Activated T-helper 1 cell treated with anti-CD3 and anti-CD28 coated beads, Interleukin-12 subunit alpha, Interleukin-12 subunit beta, Interleukin-2, Interleukin-4 antibody, amounts not matched to agents 30 ng/mL and 10 ng/mL and 1 ng/mL, durations not matched to agents 14 hours and 24 hours and 36 hours (primary cell): ENCODE measurements at regions of chr19 and their contacts with region 1.

Region 1: DNA sequence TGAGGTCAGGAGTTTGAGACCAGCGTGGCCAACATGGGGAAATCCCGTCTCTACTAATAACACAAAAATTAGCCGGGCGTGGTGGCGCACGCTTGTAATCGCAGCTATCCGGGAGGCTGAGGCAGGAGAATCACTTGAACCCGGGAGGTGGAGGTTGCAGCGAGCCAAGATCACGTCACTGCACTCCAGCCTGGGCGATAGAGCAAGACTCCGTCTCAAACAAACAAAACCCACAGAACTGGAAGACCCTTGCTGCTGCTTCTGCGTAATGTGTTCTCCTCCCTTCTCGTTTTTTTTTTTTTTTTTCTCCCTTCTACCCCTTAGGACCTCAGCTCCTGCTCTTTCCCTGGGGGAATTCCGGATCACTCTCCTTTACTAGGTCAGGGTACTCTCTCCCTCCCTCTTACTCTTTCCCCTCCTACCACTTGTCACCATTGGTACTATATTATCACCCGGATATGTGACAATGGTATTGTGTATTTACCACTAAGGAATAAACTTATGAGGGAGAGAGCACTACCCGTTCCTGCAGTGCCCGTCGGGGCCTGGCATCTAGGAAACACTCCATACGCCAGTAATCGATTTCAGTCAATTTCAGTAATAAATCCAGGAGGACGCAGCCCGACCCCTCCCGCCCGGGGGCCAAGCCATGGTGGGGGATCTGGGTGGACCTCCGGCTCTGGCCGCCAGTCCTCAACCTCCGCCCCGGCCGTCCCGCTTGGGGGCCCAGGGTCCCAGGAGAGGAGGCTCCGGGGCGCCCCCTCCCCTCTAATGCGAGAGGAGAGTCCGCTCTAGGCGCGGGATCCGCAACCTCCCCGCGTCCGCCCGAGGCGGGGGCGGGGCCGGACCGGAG is 429 bp upstream of the GARRE1 start:
- DNase-seq: peak; percentile 86
- H3K4me3 Mint-ChIP-seq: peak overlapping the region; percentile 93
- H3K27ac Mint-ChIP-seq: peak overlapping the region; percentile 98
- H3K4me1 Mint-ChIP-seq: peaks cover 9% of the 10 kb centered on the region
- H3K27me3 Mint-ChIP-seq: peaks cover 2% of the 10 kb centered on the region

Region 2: DNA sequence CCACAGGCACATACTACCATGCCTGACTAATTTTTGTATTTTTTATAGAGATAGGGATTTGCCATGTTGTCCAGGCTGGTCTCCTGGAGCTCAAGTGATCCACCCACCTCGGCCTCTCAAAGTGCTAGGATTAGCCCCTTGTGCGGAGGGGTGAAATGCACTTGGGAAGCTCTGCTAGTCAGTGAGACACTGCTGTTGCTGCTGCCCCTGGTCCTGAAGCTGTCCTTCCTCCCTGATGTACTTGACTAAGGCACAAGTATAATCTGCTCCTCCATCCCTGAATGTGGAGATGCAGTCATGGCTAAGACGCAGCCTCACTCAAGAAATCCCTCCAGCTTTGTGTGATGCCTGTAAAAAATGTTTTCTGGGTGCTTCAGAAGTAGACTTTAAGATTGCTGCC is 332.8 kb before region 1 on chr19:
- intact Hi-C with region 1: no loop called
- DNase-seq: no peak
- H3K4me3 Mint-ChIP-seq: no peak overlapping the region
- H3K27ac Mint-ChIP-seq: no peak overlapping the region
- H3K4me1 Mint-ChIP-seq: no peaks in the 10 kb centered on the region
- H3K27me3 Mint-ChIP-seq: peaks cover 3% of the 10 kb centered on the region

Region 3: GRCh38 chr19:34134190-34135053 is 119.5 kb before region 1 on chr19:
- intact Hi-C with region 1: loop called (anchors 1 kb)
- DNase-seq: peak; percentile 83
- H3K4me3 Mint-ChIP-seq: peak overlapping the region; percentile 88
- H3K27ac Mint-ChIP-seq: peak overlapping the region; percentile 77
- H3K4me1 Mint-ChIP-seq: no peaks in the 10 kb centered on the region
- H3K27me3 Mint-ChIP-seq: peaks cover 10% of the 10 kb centered on the region

Region 4: GRCh38 chr19:34193439-34193838 is 60.5 kb before region 1 on chr19:
- intact Hi-C with region 1: no loop called
- DNase-seq: no peak
- H3K4me3 Mint-ChIP-seq: no peak overlapping the region
- H3K27ac Mint-ChIP-seq: no peak overlapping the region
- H3K4me1 Mint-ChIP-seq: peaks cover 25% of the 10 kb centered on the region
- H3K27me3 Mint-ChIP-seq: no peaks in the 10 kb centered on the region

Region 5: DNA sequence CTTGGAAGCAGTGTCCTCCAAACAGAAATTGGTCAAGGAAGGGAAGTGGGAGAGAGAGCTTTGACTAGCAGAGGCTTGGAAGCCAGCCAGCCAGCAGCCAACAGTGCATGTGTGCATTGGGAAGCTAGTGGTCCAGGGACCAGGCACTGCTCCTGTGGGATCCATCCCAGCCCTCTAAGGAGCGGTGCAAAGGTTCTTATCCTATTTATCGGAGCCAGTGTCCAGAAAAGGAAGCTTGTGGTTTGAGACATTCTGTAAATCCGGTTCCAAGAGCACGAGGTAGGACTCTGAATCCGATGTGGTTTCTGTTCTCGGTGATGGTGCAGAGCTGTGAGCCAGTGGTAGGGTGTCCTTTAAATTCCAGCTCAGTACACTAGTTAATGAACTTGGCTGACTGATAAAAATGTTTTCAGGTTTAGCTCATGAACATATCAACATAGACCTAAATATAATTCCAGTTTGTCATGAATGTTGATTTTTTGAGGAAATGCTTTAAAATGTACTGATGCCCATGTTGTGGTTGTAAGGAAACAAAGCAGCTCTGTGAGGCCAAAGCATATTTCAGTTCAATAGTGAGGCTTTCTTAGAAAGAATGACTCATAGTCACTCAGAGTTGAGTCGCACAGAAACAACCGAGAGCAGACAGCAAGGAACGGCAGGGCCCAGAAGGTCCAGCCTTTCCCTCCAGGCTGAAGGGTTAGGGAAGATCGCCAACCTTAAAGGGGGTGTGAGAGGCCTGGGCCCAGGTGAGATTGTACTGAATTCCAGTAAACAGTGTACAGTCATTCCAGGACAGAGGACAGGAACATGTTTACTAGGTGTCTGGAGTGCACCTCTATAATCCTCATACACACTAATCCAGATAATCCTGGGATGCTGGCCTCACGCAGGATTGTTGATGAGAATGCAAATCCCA is 21.1 kb before region 1 on chr19:
- intact Hi-C with region 1: loop called (anchors 1 kb)
- DNase-seq: peak; percentile 5
- H3K4me3 Mint-ChIP-seq: peak overlapping the region; percentile 62
- H3K27ac Mint-ChIP-seq: peak overlapping the region; percentile 76
- H3K4me1 Mint-ChIP-seq: peaks cover 31% of the 10 kb centered on the region
- H3K27me3 Mint-ChIP-seq: no peaks in the 10 kb centered on the region

Region 6: GRCh38 chr19:34269968-34270621 is 16.2 kb after region 1 on chr19:
- intact Hi-C with region 1: loop called (anchors 1 kb)
- DNase-seq: peak; percentile 51
- H3K4me3 Mint-ChIP-seq: peak overlapping the region; percentile 60
- H3K27ac Mint-ChIP-seq: peak overlapping the region; percentile 76
- H3K4me1 Mint-ChIP-seq: peaks cover 22% of the 10 kb centered on the region
- H3K27me3 Mint-ChIP-seq: peaks cover 4% of the 10 kb centered on the region

Region 7: DNA sequence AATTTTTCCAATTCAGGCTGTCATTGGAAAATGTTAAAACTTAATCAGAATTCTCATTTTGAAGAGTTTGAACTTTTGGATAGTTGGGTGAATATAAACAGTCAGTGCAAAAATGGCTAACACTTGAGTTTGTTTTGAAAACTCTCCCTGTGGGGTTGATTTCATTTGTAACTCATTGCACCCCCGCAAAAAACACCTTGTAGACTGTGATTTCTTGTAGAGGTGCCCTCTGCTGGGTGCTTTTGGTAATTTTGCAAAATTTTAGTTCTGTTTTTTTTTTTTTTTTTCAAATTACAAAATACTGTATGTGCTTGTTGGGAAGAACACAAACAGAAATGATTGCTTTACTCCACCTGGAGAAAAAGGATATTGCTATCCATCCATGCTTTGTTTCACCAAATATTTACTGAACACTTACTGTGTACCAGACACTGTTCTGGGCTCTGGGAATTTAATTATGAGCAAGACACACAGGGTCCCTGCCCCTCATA is 82.9 kb after region 1 on chr19:
- intact Hi-C with region 1: loop called (anchors 2 kb)
- DNase-seq: peak; percentile 14
- H3K4me3 Mint-ChIP-seq: no peak overlapping the region
- H3K27ac Mint-ChIP-seq: no peak overlapping the region
- H3K4me1 Mint-ChIP-seq: peaks cover 5% of the 10 kb centered on the region
- H3K27me3 Mint-ChIP-seq: no peaks in the 10 kb centered on the region

Region 8: DNA sequence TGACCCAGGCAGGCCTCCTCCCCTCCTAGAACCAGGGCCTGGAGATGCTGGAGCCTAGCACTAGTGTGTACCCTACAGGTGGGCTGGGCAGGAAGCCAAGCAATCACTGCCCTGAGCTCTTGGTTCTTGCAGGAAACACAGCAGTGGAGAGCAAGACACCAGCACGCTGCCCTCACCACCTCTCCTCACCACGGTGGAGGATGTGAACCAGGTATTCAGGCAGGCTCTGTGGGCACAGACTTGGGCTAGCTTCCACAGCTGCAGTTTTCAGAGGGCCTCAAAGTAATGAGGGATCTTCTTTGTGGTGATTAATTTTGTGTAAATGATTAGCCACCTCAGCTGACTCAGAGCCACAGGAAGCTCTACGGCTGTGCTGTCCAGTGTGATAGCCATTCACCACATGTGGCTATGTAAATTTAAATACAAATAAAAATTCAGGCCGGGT is 97.5 kb after region 1 on chr19:
- intact Hi-C with region 1: loop called (anchors 2 kb)
- DNase-seq: peak; percentile 11
- H3K4me3 Mint-ChIP-seq: peak overlapping the region; percentile 47
- H3K27ac Mint-ChIP-seq: peak overlapping the region; percentile 80
- H3K4me1 Mint-ChIP-seq: peaks cover 29% of the 10 kb centered on the region
- H3K27me3 Mint-ChIP-seq: no peaks in the 10 kb centered on the region

Region 9: DNA sequence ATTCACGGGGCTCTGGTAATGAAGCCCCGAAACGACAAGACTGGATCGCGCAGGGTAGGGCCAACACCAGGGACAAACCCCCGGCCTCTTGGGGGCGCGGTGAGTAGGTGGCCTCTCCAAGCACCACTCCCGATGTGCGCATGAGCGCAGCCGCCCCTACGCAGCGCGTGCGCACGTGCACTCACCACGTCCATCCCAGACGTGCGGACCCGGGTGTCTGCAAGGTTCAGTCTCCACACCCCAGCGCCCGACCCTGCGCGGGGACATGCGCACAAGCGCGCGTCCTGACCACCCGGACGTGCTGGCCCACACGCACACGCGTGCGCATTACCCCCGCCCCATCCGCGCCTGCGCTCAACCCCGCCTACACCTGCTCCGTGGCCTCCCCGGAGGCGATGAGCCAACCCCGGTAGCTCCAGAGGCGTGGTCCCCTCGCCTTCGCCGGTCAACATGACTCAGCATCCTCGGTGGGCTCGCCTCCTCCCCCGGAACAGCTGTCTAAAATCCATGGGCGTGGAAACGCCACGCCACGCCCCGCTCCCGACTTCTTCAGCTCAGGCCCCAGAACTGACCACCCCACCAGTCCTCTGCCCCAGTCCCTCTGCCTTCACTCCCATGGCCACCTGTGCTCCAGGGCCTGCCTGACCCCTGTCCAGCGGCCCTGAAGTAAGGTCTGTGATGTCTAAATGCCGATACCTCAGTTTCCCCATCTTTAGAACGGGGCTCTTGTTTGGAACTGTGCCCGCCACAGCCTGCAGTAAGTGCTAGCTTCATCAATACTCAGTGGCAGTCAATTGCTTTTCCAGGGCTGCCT is 105.4 kb after region 1 on chr19:
- intact Hi-C with region 1: loop called (anchors 2 kb)
- DNase-seq: peak; percentile 96
- H3K4me3 Mint-ChIP-seq: peak overlapping the region; percentile 84
- H3K27ac Mint-ChIP-seq: peak overlapping the region; percentile 97
- H3K4me1 Mint-ChIP-seq: peaks cover 45% of the 10 kb centered on the region
- H3K27me3 Mint-ChIP-seq: no peaks in the 10 kb centered on the region